ENCODE measurements at regions of chr4 and their contacts with region 1.

Region 1: DNA sequence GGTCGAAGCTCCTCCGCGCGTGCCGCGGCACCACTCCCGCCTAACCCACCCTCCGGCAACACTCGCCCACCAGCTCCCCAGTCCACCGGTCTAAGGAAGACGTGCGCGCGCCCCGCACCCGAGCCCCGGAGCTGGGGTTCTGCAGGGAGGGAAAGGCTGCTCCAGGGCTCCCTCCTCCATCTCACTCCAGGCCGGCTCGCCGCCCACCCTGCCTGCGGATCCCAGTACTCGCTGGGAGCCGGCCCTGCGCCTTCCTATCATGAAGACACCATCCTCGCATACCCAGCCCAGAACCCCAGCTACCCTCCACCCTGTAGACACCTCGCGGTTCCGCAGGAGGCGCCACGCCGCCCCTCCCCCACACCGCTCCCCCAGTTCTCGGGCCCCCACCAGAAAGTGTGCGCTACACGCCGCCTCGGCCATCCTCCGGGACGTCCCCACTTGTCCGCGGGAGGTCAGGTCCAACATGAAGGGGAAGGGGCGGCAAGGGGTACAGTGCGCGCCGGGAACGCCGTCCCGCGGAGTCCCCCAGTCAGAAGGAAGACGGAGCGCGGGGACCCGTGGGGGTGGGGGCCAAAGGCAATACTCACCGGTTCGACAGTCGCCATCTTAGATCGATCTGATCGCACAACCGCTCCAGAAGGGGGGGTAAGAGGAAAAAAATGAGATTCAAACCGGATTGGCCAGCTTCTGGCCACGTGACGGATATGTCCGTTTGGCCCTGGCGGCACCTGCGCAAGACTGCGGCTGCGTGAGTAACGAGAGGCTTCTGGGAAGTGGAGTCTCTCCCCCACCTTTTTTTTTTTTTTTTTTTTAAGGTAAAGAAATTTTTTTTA is at the start of gene EIF4E:
- DNase-seq: peak; percentile 97 to 99 (median 99)
- ATAC-seq: peak; percentile 94 to 96 (median 95)
- H3K4me3 ChIP-seq: peak within 1 kb of the TSS; percentile 57 to 99 (median 87)
- H3K27ac ChIP-seq: peak within 1 kb of the TSS; percentile 76 to 99 (median 93)
- H3K4me1 ChIP-seq: peaks cover 0 to 58% (median 13%) of the 10 kb centered on the region in 12 donors
- H3K27me3 ChIP-seq: no peaks in the 10 kb centered on the region
- CTCF ChIP-seq: peak in 8 of 12 donors; percentile 1 to 39 (median 19)
- POLR2A ChIP-seq: peak in 1 of 2 donors; percentile 45
- total RNA-seq, gene EIF4E: 49.3 to 93.2 (median 62.2) TPM

Region 2: GRCh38 chr4:98467627-98468072 is 461.1 kb before region 1 on chr4:
- intact Hi-C with region 1: loop called in 2 of 10 experiments (anchors 10 kb)
- DNase-seq: peak; percentile 66 to 78 (median 73)
- ATAC-seq: peak; percentile 58 to 97 (median 92)
- H3K4me3 ChIP-seq: peak overlapping the region in 11 of 12 donors; percentile 20 to 53 (median 45)
- H3K27ac ChIP-seq: no peak overlapping the region
- H3K4me1 ChIP-seq: peaks cover 0 to 20% (median 10%) of the 10 kb centered on the region in 12 donors
- H3K27me3 ChIP-seq: no peaks in the 10 kb centered on the region
- CTCF ChIP-seq: peak; percentile 57 to 82 (median 71)
- POLR2A ChIP-seq: no peak

Region 3: DNA sequence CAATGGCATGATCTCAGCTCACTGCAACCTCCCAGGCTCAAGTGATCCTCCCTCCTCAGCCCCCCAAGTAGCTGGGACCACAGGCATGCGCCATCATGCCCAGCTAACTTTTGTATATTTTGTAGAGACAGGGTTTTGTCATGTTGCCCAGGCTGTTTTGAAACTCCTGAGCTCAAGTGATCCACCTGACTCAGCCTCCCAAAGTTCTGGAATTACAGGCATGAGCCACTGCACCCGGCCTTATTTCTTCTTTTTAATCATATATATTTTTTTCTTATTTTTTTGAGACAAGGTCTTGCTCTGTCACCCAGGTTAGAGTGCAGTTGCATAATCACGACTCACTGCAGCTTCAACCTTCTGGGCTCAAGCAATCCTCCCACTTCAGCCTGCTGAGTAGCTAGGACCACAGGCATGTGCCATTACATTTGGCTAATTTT is 454.3 kb before region 1 on chr4:
- intact Hi-C with region 1: loop called in 2 of 10 experiments (anchors 10 kb)
- DNase-seq: no peak
- ATAC-seq: no peak
- H3K4me3 ChIP-seq: no peak overlapping the region
- H3K27ac ChIP-seq: no peak overlapping the region
- H3K4me1 ChIP-seq: no peaks in the 10 kb centered on the region
- H3K27me3 ChIP-seq: no peaks in the 10 kb centered on the region
- CTCF ChIP-seq: no peak
- POLR2A ChIP-seq: no peak

Region 4: GRCh38 chr4:98833384-98833783 is 95.3 kb before region 1 on chr4:
- intact Hi-C with region 1: loop called in 1 of 10 experiments (anchors 5 kb)
- DNase-seq: peak in 1 of 5 donors; percentile 23
- ATAC-seq: peak; percentile 78 to 95 (median 90)
- H3K4me3 ChIP-seq: no peak overlapping the region
- H3K27ac ChIP-seq: peak overlapping the region in 10 of 12 donors; percentile 53 to 80 (median 66)
- H3K4me1 ChIP-seq: peaks cover 0 to 6% (median 1%) of the 10 kb centered on the region in 12 donors
- H3K27me3 ChIP-seq: no peaks in the 10 kb centered on the region
- CTCF ChIP-seq: no peak
- POLR2A ChIP-seq: no peak

Region 5: GRCh38 chr4:98995183-98996055 is 66.7 kb after region 1 on chr4 and contains the start of gene METAP1:
- intact Hi-C with region 1: loop called in 7 of 10 experiments (anchors 2 to 10 kb)
- DNase-seq: peak; percentile 94 to 97 (median 96)
- ATAC-seq: peak; percentile 92 to 97 (median 96)
- H3K4me3 ChIP-seq: peak within 1 kb of the TSS; percentile 89 to 99 (median 96)
- H3K27ac ChIP-seq: peak within 1 kb of the TSS; percentile 88 to 96 (median 92)
- H3K4me1 ChIP-seq: peaks cover 0 to 26% (median 15%) of the 10 kb centered on the region in 12 donors
- H3K27me3 ChIP-seq: no peaks in the 10 kb centered on the region
- CTCF ChIP-seq: peak; percentile 32 to 80 (median 56)
- POLR2A ChIP-seq: peak; percentile 26 to 69
- total RNA-seq, gene METAP1: 51.8 to 71.4 (median 63.6) TPM

Region 6: DNA sequence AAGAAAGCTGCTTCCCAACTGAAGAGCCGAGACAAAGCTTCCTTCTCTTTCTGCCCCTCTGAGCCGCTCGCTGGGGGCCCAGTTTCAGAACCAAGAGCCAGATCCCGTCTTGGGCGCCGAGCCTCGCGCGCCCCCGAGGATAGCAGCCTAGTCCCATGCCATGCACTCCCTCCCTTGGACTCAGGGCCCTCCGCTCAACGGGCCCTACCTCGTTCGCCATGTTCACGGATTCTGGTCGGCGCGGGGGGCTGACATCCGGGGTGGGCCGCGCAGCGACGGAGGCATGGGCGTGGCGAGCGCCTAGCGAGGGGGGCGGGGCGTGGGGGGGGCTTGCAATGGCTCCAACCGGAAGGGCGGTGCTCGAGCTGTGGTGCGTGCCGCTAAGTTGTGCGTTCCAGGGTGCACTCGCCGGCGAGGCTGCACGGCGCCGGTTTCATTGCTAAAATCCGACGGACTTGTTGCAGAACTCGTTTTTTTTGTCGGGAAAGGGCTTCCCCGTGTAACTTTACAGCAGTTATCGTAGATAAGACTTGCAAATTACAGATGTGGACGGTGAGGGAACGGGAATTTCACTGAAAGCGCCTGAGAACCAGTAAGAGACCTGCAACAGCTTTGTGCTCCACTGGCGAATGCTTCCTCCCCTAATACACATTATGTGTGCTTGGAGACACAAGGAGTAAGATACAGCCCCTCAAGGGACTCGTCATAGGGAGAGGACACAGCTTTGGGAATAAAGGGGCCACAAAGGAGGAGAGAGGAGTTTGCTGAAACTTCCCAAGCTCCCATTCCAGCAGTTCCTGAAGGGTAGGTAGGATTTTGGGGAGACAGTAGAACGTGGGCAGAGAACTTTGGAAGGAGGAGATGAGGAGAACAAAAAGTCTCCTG is 160.0 kb after region 1 on chr4 and contains the start of gene ADH5:
- intact Hi-C with region 1: loop called in 2 of 10 experiments (anchors 10 kb)
- DNase-seq: peak; percentile 90 to 94 (median 93)
- ATAC-seq: peak; percentile 98 to 100 (median 98)
- H3K4me3 ChIP-seq: peak within 1 kb of the TSS; percentile 37 to 88 (median 69)
- H3K27ac ChIP-seq: peak within 1 kb of the TSS; percentile 84 to 96 (median 92)
- H3K4me1 ChIP-seq: peaks cover 0 to 57% (median 30%) of the 10 kb centered on the region in 12 donors
- H3K27me3 ChIP-seq: no peaks in the 10 kb centered on the region
- CTCF ChIP-seq: no peak
- POLR2A ChIP-seq: peak in 1 of 2 donors; percentile 82
- total RNA-seq, gene ADH5: 122 to 246 (median 145) TPM